Dorsolateral prefrontal cortex (tissue), 120 donors: ENCODE measurements at regions of chr2 and their contacts with region 1.

Region 1: DNA sequence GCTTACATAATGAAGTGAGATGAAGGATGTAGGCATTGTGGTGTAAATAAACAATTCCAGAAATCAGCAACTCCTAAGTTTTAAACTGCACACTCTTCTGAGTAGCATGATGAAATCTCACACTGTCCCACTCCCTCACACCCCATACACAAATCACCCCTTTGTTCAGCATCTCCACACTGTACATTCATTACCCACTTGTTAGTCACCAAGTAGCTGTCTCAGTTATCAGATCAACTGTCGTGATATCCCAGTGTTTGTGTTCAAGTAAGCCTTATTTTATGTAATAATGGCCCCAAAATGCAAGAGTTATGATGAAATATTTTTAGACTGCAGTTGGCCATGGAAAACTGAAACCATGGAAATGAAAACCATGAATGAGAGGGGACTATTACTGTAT is 135.7 kb downstream of the GRB14 start:
- DNase-seq: no peak
- H3K4me3 ChIP-seq: no peak overlapping the region
- H3K27ac ChIP-seq: no peak overlapping the region
- H3K27me3 ChIP-seq: no peaks in the 10 kb centered on the region
- CTCF ChIP-seq: no peak

Region 2: GRCh38 chr2:163171786-163172531 is 1313.6 kb before region 1 on chr2:
- intact Hi-C with region 1: loop called in 1 of 2 experiments (anchors 10 kb)
- DNase-seq: no peak
- H3K4me3 ChIP-seq: no peak overlapping the region
- H3K27ac ChIP-seq: no peak overlapping the region
- H3K27me3 ChIP-seq: no peaks in the 10 kb centered on the region
- CTCF ChIP-seq: no peak

Region 3: DNA sequence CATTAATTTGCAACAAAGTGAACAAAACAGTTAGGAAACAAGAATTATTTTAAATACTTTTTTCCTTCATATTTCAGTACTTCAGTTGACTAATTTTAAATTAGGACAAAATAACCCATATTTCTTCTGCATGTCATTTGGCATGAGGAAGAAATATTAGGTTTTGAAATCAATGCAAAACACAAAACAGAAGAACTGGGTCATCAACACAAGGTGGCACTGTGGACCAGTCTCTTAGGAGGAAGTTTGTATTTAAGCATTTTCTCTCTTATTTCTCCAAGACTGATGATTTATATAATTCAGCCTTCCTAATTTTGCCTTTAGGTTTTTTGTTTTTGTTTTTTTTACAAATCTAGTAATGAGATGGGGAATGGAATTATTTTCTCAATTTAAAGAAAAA is 1294.2 kb before region 1 on chr2:
- intact Hi-C with region 1: loop called in 1 of 2 experiments (anchors 5 kb)
- DNase-seq: peak in 1 of 10 donors; percentile 22
- H3K4me3 ChIP-seq: no peak overlapping the region
- H3K27ac ChIP-seq: no peak overlapping the region
- H3K27me3 ChIP-seq: no peaks in the 10 kb centered on the region
- CTCF ChIP-seq: peak; percentile 35 to 81 (median 66)